HepG2 (cell line): ENCODE measurements at regions of chr10 and their contacts with region 1.

Region 1: DNA sequence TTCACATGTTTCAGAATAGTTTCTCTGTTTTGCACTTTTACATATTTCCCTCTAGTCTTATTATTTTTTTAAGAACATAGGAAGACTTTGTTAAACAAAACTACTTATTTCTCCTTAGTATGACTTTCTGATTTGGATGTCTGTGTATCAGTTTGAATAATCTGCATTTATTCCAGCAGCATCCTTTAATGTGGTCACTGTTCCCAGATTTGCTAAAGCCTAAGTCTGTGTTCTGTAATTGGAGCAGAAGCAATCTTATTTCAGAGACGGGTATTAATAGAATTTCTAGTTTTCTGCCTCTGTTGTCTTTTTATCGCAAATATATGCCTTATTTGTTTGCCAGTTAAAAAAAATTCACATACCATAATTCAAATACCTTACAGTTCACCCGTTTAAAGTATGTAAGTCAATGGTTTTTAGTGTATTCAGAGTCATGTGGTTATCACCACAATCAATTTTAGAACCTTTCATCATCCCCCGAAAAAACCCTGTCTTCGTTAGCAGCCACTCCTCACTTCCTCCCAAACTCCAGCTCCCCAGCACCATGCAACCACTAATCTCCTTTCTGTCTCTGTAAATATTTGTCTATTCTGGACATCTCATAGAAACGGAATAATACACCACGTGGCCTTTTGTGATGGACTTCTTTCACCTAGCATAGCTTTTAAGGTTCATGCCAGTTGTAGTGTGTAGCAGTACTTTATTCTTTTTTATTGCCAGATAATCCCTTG is 58.7 kb downstream of the INPP5F start:
- DNase-seq: peak; percentile 90
- ATAC-seq: peak; percentile 91
- H3K4me3 ChIP-seq: no peak overlapping the region; a peak in 1 of 6 replicates
- H3K27ac ChIP-seq: peak overlapping the region; percentile 5
- H3K4me1 ChIP-seq: peaks cover 41% of the 10 kb centered on the region
- H3K27me3 ChIP-seq: no peaks in the 10 kb centered on the region
- CTCF ChIP-seq: no peak
- EP300 ChIP-seq: peak in 1 of 2 experiments; percentile 73; a peak in 2 of 4 replicates
- POLR2A ChIP-seq: no peak
- RAD21 ChIP-seq: no peak

Region 2: GRCh38 chr10:119762805-119763798 is 21.4 kb before region 1 on chr10:
- CTCF ChIA-PET with region 1: no interaction called
- POLR2A ChIA-PET with region 1: no interaction called
- in situ Hi-C with region 1: no loop called
- intact Hi-C with region 1: loop called (anchors 1 kb)
- DNase-seq: no peak
- ATAC-seq: no peak
- H3K4me3 ChIP-seq: no peak overlapping the region
- H3K27ac ChIP-seq: peak overlapping the region; percentile 80
- H3K4me1 ChIP-seq: peaks cover 44% of the 10 kb centered on the region
- H3K27me3 ChIP-seq: no peaks in the 10 kb centered on the region
- CTCF ChIP-seq: no peak
- EP300 ChIP-seq: no peak
- POLR2A ChIP-seq: no peak
- RAD21 ChIP-seq: no peak